Calu3 (cell line): ENCODE measurements at regions of chr22 and their contacts with region 1.

Region 1: GRCh38 chr22:46116491-46116958 is 33.8 kb upstream of the PPARA start:
- DNase-seq: peak; percentile 95
- H3K4me3 Mint-ChIP-seq: no peak overlapping the region
- H3K27ac Mint-ChIP-seq: peak overlapping the region; percentile 85
- H3K4me1 Mint-ChIP-seq: peaks cover 26% of the 10 kb centered on the region
- H3K27me3 Mint-ChIP-seq: no peaks in the 10 kb centered on the region
- CTCF ChIP-seq: peak; percentile 85

Region 2: GRCh38 chr22:45977003-45977411 is 139.5 kb before region 1 on chr22 and contains the start of gene WNT7B:
- CTCF ChIA-PET with region 1: no interaction called
- intact Hi-C with region 1: no loop called
- DNase-seq: peak; percentile 84
- H3K4me3 Mint-ChIP-seq: no peak within 1 kb of the TSS
- H3K27ac Mint-ChIP-seq: no peak within 1 kb of the TSS
- H3K4me1 Mint-ChIP-seq: peaks cover 22% of the 10 kb centered on the region
- H3K27me3 Mint-ChIP-seq: no peaks in the 10 kb centered on the region
- CTCF ChIP-seq: no peak
- total RNA-seq, gene WNT7B: 97.0 and 100.0 TPM in 2 replicates

Region 3: DNA sequence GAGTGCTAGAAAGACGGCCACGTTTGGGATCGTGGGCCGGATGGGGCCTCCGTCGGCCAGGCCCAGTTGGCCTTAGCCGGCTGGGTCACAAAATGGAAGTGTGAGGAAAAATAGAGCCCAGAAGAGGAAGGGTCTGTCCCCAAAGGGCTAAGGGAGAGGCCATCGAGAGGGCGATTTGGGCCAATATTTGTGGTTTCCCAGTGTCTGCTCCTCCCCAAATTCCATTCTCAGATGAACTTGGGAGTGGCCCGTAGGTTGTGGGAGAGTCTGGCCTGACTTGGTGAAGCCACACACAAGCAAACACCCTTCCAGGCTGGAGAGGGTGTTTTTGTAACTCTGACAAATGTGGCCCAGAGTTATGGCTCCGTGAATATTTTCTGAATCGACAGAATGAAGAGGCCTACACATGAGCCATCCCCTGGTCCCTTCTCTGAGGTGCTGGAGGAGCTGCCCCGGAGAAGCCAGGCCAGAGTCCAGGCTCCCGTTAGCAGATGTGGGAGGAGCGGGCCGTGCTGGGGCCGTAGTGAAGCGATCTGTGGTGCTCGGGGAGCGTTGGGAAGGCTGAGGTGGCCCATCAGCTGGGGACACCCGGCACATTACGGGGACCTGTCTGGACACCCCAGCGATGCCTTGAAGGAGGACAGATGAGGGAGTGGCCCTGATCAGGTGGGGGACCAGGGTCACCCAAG is 39.7 kb before region 1 on chr22:
- CTCF ChIA-PET with region 1: interaction called, 12 read pairs
- intact Hi-C with region 1: no loop called
- DNase-seq: peak; percentile 50
- H3K4me3 Mint-ChIP-seq: peak overlapping the region; percentile 83
- H3K27ac Mint-ChIP-seq: peak overlapping the region; percentile 98
- H3K4me1 Mint-ChIP-seq: peaks cover 37% of the 10 kb centered on the region
- H3K27me3 Mint-ChIP-seq: no peaks in the 10 kb centered on the region
- CTCF ChIP-seq: no peak